Endothelial cell of umbilical vein (primary cell): ENCODE measurements at regions of chr1 and their contacts with region 1.

Region 1: DNA sequence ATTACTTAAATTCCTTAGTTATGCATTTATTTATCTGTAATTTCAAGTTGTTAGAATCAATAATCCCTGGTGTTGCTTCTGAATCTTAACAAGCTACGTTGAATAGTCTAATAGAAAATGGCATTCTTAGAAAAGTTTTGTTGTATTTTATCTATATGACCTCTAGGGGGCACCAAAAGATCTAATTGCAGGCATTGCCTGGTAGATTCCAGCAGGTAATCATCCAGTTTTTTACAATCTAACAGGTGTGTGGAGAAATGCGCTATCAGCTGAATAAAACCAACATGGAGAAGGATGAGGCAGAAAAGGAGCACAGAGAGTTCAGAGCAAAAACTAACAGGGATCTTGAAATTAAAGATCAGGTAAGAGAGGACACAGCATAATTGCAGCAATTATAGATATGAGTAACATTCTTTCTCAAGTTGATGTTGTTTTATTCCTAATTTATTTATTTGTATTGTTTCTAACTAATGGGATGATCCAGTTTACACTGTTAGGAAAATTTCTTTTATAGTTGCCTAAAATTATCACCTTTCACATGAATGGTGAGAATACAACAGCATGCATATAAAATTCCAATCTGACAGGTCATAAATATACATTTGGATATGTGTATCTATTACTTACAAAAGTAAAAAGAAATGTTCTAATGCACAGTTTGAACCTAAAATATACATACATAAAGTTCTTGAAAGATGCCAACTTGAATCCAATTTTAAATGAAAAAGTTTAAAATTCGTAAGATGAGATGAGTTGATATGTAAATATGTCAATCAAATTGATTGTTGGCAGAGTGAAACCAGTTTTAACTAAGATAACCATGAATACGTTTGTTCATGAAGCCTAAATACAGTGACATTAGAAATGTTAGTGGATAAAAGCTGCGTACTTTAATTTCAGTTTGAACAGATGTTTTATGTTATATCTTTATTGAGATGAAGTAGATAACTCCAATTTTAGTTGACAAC is 88.4 kb downstream of the SDCCAG8 start:
- DNase-seq: peak; percentile 51
- H3K4me3 ChIP-seq: no peak overlapping the region
- H3K27ac ChIP-seq: no peak overlapping the region
- H3K4me1 ChIP-seq: peaks cover 17% of the 10 kb centered on the region
- H3K27me3 ChIP-seq: no peaks in the 10 kb centered on the region
- CTCF ChIP-seq: peak; percentile 20 to 37
- POLR2A ChIP-seq: no peak

Region 2: DNA sequence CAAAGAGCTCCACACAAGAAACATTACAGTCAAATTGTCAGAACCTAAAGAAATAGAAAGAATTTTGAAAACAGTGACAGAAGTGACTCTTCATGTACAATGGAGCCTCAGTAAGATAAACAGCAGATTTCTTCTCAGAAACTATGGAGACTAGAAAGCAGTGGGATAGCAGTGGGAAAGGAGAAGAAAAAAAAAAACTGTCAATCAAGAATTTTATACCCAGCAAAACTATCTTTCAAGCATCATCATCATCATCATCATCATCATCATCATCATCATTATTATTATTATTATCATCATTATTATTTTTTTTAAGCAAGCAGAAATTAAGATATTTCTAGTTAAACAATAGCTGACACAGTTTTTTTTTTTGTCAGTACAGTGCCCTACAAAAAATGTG is 113.3 kb before region 1 on chr1:
- CTCF ChIA-PET with region 1: no interaction called
- POLR2A ChIA-PET with region 1: no interaction called
- dilution Hi-C with region 1: no loop called
- intact Hi-C with region 1: no loop called
- DNase-seq: peak; percentile 33
- H3K4me3 ChIP-seq: no peak overlapping the region
- H3K27ac ChIP-seq: no peak overlapping the region
- H3K4me1 ChIP-seq: peaks cover 17% of the 10 kb centered on the region
- H3K27me3 ChIP-seq: no peaks in the 10 kb centered on the region
- CTCF ChIP-seq: no peak
- POLR2A ChIP-seq: no peak

Region 3: GRCh38 chr1:243287652-243288051 is 56.6 kb before region 1 on chr1:
- CTCF ChIA-PET with region 1: no interaction called
- POLR2A ChIA-PET with region 1: no interaction called
- dilution Hi-C with region 1: no loop called
- intact Hi-C with region 1: no loop called
- DNase-seq: peak; percentile 95
- H3K4me3 ChIP-seq: peak overlapping the region in 1 of 3 experiments; percentile 0
- H3K27ac ChIP-seq: peak overlapping the region; percentile 98
- H3K4me1 ChIP-seq: peaks cover 46% of the 10 kb centered on the region
- H3K27me3 ChIP-seq: no peaks in the 10 kb centered on the region
- CTCF ChIP-seq: no peak
- POLR2A ChIP-seq: no peak

Region 4: DNA sequence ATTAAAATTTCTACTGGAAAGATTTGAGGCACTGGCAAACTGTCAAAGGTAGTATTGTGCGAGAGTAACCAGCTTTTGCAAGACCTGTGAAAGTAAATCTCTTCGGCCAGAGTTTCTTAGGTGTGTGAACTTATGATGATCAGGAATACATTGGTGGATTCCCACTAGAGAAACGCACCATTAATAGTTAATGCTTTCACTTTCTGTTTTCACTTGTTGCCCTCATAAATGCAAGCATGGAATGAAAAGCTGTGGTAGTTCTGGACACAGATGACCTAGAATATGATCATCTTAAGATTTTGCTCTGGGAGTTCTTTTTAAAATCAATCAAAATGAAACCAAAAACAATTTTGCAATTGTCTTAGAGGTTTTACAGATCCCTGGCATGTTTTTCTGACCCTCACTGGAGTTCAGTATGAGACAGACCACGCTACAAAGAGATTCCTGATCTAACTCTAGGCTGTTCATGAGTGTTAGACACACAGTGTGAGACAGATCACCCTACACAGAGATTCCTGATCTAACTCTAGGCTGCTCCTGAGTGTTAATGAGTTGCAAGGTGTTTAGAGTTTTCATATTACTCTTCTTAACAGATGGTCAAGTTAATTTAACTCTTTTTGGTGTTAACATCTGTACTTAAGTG is 10.4 kb after region 1 on chr1:
- CTCF ChIA-PET with region 1: interaction called, 14 read pairs
- POLR2A ChIA-PET with region 1: no interaction called
- dilution Hi-C with region 1: no loop called
- intact Hi-C with region 1: no loop called
- DNase-seq: peak; percentile 63
- H3K4me3 ChIP-seq: peak overlapping the region in 2 of 3 experiments; percentile 7 to 40
- H3K27ac ChIP-seq: no peak overlapping the region
- H3K4me1 ChIP-seq: peaks cover 6% of the 10 kb centered on the region
- H3K27me3 ChIP-seq: no peaks in the 10 kb centered on the region
- CTCF ChIP-seq: no peak
- POLR2A ChIP-seq: no peak

Region 5: DNA sequence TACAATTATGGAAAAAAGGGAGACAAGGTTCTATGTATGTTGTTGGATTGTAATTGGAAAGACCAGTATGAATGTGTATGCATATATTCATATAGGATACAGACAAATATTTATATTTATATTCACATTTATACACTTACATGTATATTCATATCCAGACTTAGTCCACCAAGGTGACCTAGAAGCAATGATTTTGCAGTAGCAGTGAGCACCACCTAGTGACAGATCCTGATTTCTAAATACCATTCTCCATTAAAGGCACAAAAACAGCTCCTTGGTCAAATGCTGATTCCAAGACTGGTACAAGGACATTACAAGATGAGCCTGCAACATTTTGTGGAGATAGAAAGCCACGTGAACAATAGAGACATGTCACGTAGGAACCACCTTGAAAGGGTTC is 65.0 kb after region 1 on chr1:
- CTCF ChIA-PET with region 1: interaction called, 92 read pairs
- POLR2A ChIA-PET with region 1: no interaction called
- dilution Hi-C with region 1: no loop called
- intact Hi-C with region 1: loop called (anchors 1 kb)
- DNase-seq: peak; percentile 56
- H3K4me3 ChIP-seq: no peak overlapping the region
- H3K27ac ChIP-seq: no peak overlapping the region
- H3K4me1 ChIP-seq: peaks cover 19% of the 10 kb centered on the region
- H3K27me3 ChIP-seq: no peaks in the 10 kb centered on the region
- CTCF ChIP-seq: peak; percentile 23 to 39
- POLR2A ChIP-seq: no peak

Region 6: DNA sequence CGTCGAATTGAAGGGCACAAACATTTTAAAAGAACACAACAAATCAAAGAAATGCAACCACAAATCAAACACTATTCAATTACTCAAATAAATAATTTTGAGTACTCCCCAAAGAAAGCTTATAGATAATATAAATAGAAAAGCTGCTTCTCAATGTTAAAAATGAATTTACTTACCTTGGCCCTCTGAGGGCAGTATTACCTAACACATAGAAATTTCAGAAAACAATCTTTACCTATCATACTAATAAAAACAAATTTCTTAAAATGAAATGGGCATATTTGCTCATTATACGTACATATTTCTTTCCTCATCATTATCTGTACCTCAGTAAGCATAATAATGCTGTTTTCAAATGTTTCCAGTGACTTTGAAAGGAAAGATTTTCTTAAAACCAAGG is 364.0 kb after region 1 on chr1:
- CTCF ChIA-PET with region 1: interaction called, 5 read pairs
- POLR2A ChIA-PET with region 1: no interaction called
- dilution Hi-C with region 1: no loop called
- intact Hi-C with region 1: loop called (anchors 5 kb)
- DNase-seq: peak; percentile 40
- H3K4me3 ChIP-seq: no peak overlapping the region
- H3K27ac ChIP-seq: no peak overlapping the region
- H3K4me1 ChIP-seq: peaks cover 2% of the 10 kb centered on the region
- H3K27me3 ChIP-seq: no peaks in the 10 kb centered on the region
- CTCF ChIP-seq: no peak
- POLR2A ChIP-seq: no peak

Region 7: GRCh38 chr1:243850452-243851256 is 506.4 kb after region 1 on chr1:
- CTCF ChIA-PET with region 1: interaction called, 4 read pairs
- POLR2A ChIA-PET with region 1: no interaction called
- dilution Hi-C with region 1: no loop called
- intact Hi-C with region 1: loop called (anchors 5 kb)
- DNase-seq: peak; percentile 80
- H3K4me3 ChIP-seq: peak overlapping the region; percentile 36 to 71 (median 61)
- H3K27ac ChIP-seq: peak overlapping the region; percentile 93
- H3K4me1 ChIP-seq: peaks cover 17% of the 10 kb centered on the region
- H3K27me3 ChIP-seq: no peaks in the 10 kb centered on the region
- CTCF ChIP-seq: no peak
- POLR2A ChIP-seq: peak; percentile 28

Region 8: DNA sequence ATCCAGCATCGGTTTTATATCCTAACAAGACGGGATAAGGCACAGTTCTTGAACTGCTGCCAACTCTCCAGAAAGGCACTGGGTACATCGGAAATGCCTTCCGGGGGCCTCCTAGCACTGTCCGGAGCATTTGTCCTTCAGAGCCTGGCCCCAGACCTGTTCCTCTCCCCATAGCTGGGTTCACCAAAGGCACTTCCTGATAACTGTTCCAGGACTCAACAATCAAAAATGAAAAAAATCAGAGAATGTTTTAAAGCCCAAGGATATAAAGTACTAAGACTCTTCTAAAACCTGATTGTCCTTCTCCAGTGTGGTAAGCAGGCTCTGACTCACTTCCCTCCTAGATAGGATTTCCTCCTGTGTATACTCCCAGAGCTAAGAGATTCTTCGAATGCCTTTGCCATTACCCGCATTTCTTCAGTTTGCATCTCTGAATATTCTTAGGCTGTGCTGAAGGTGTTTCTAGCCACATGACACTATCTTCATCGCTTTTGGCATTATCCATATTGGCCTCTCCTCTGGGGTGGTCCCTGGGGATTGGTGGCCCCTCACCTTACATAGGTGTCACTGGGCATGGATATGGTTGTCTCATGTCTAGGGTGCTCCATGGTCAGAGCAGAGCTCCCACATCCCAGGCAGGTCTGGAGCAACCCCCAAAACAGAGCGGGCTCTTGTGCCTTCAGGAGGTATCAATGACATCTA is 819.8 kb after region 1 on chr1:
- CTCF ChIA-PET with region 1: interaction called, 3 read pairs
- POLR2A ChIA-PET with region 1: no interaction called
- dilution Hi-C with region 1: no loop called
- intact Hi-C with region 1: loop called (anchors 5 kb)
- DNase-seq: peak; percentile 95
- H3K4me3 ChIP-seq: peak overlapping the region in 1 of 3 experiments; percentile 18
- H3K27ac ChIP-seq: peak overlapping the region; percentile 99
- H3K4me1 ChIP-seq: peaks cover 32% of the 10 kb centered on the region
- H3K27me3 ChIP-seq: no peaks in the 10 kb centered on the region
- CTCF ChIP-seq: no peak
- POLR2A ChIP-seq: peak; percentile 52

Region 9: DNA sequence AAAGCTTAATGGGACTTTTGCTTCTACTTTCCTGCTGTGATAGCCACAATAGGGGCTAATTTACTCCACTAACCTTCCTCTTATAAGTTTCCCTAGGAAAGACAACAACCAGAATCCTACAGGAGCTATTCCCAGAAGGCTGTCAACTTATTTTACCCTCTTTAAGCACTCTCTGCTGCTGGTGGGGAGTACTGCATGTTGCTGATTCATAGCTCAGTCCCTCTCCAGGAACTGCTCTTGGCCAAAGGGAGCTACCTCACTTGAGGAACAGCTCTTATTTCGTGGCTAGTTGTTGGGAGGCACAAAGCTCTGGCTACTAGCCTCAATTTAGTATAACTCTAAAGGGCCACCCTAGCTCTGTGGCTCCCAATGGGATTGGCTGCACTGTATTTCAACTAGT is 1070.3 kb after region 1 on chr1:
- CTCF ChIA-PET with region 1: interaction called, 11 read pairs
- POLR2A ChIA-PET with region 1: no interaction called
- dilution Hi-C with region 1: no loop called
- intact Hi-C with region 1: no loop called
- DNase-seq: peak; percentile 64
- H3K4me3 ChIP-seq: no peak overlapping the region
- H3K27ac ChIP-seq: no peak overlapping the region
- H3K4me1 ChIP-seq: no peaks in the 10 kb centered on the region
- H3K27me3 ChIP-seq: no peaks in the 10 kb centered on the region
- CTCF ChIP-seq: peak; percentile 17 to 24
- POLR2A ChIP-seq: no peak